ENCODE measurements at regions of chr5 and their contacts with region 1.

Region 1: DNA sequence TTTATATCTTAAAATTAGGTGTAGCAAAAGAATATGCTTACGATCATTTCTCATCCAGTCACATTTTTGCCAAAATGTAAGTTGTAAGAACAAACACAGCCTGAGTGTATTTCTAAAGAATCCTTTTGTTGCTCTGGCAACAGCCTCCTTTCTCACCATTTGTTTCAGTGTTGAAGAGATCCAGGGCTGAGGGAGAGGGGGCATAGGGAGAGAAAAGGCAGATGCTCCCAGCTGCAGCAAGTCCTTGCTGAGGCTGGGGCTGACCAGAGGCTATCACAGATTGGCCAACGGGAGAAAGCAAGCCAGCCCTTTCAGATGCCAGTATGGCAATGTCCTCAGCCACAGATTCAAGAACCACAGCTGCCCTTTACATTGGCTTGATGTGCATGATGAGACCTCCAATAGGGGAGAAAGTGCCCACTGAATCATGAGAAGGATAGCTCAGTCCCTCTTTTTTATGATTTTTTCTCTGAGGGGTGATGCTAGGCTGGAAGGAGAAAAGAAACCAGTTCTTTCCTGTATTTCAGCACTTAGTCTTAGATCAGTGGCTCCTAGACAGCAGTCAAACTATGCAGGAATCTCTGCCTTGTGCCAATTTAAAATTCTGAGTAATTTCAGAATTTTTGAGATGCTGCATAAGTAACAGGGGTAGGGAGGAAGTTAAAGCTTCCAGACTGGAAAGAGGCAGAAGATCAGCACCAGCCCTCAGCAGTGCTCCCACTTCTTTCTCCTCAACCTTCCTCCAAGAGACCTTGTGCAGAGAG is 142.1 kb downstream of the LHFPL2 start:
- DNase-seq: no peak
- ATAC-seq: no peak

Region 2: GRCh38 chr5:78527054-78527859 is 20.8 kb after region 1 on chr5:
- intact Hi-C with region 1: loop called (anchors 2 kb)
- DNase-seq: no peak
- ATAC-seq: peak; percentile 92